ENCODE measurements at regions of chr6 and their contacts with region 1.

Region 1: DNA sequence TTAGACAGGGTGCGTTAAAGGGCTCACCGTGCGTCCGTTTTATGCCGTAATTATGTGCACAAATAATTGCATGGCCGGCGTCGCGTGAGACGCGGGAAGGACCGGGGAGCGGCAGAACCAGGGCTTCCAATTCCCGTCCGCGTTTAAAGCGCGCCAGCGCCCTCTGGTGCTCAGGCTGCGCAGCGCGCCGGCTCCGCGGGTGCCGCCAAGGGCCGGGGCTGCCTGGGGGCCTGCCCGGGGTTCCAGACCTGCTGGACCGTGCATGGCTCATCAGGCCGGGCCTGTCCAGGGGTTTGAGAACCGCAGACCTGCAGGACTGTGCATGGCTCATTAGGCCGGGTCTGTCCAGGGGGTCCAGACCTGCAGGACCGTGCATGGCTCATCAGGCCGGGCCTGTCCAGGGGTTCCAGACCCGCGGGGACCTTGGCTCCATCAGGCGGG is 369.0 kb downstream of the THBS2 start:
- DNase-seq: peak; percentile 89
- ATAC-seq: peak; percentile 96
- H3K4me3 ChIP-seq: peak overlapping the region; percentile 43
- H3K27ac ChIP-seq: no peak overlapping the region
- H3K4me1 ChIP-seq: no peaks in the 10 kb centered on the region
- H3K27me3 ChIP-seq: peaks cover 21% of the 10 kb centered on the region
- CTCF ChIP-seq: peak; percentile 95

Region 2: GRCh38 chr6:168370310-168370991 is 514.2 kb before region 1 on chr6:
- intact Hi-C with region 1: loop called (anchors 5 kb)
- DNase-seq: peak; percentile 84
- ATAC-seq: peak; percentile 88
- H3K4me3 ChIP-seq: no peak overlapping the region
- H3K27ac ChIP-seq: no peak overlapping the region
- H3K4me1 ChIP-seq: peaks cover 3% of the 10 kb centered on the region
- H3K27me3 ChIP-seq: no peaks in the 10 kb centered on the region
- CTCF ChIP-seq: peak; percentile 75

Region 3: GRCh38 chr6:168778201-168778600 is 106.5 kb before region 1 on chr6:
- intact Hi-C with region 1: no loop called
- DNase-seq: no peak
- ATAC-seq: peak; percentile 62
- H3K4me3 ChIP-seq: no peak overlapping the region
- H3K27ac ChIP-seq: no peak overlapping the region
- H3K4me1 ChIP-seq: no peaks in the 10 kb centered on the region
- H3K27me3 ChIP-seq: peaks cover 3% of the 10 kb centered on the region
- CTCF ChIP-seq: no peak

Region 4: GRCh38 chr6:169112483-169113320 is 228.0 kb after region 1 on chr6:
- intact Hi-C with region 1: no loop called
- DNase-seq: no peak
- ATAC-seq: no peak
- H3K4me3 ChIP-seq: no peak overlapping the region
- H3K27ac ChIP-seq: no peak overlapping the region
- H3K4me1 ChIP-seq: no peaks in the 10 kb centered on the region
- H3K27me3 ChIP-seq: no peaks in the 10 kb centered on the region
- CTCF ChIP-seq: no peak

Measured in upper lobe of right lung (tissue), 1 donor.